K562 (cell line): ENCODE measurements at regions of chr13 and their contacts with region 1.

Region 1: DNA sequence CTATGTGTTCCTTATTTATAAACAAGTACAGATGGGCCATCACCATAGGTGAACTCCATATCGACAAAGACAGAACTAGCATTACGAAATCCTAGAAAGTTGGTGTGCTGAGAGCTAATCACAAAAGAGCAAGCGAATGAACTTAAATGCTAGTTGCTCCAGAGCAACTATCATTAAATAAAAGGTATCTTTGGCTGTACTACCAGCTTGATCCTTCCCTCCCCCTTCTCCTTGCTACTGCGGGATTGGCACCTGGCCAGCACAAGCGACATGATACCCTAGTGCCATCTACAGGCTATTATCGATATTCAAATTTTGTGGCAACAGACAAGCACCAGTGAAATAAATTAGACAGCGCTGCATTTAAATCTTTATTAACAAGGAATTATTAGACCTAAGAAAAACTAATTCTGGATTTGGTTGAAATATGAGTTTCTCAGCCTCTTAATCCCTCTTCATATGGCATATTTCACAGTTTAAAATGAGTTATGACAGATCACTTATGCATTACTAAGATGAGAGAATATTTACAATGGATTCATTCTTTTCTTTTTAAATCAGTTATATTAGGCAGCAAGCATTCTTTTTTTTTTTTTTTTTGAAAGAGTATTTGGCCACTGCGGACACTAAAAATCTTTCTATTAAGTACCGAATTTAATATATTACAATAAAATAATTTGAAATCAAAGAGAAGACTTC is 5.8 kb downstream of the PCDH9 start:
- DNase-seq: peak; percentile 51 to 78 (median 62)
- ATAC-seq: peak; percentile 82
- H3K4me3 ChIP-seq: no peak overlapping the region
- H3K27ac ChIP-seq: no peak overlapping the region
- H3K4me1 ChIP-seq: peaks cover 0 to under 1% of the 10 kb centered on the region in 2 experiments; a peak in 1 of 5 replicates
- H3K27me3 ChIP-seq: no peaks in the 10 kb centered on the region
- CTCF ChIP-seq: peak; percentile 48 to 66 (median 49); a peak in 5 of 6 replicates
- EP300 ChIP-seq: no peak
- POLR2A ChIP-seq: no peak
- RAD21 ChIP-seq: peak; percentile 74 to 79

Region 2: DNA sequence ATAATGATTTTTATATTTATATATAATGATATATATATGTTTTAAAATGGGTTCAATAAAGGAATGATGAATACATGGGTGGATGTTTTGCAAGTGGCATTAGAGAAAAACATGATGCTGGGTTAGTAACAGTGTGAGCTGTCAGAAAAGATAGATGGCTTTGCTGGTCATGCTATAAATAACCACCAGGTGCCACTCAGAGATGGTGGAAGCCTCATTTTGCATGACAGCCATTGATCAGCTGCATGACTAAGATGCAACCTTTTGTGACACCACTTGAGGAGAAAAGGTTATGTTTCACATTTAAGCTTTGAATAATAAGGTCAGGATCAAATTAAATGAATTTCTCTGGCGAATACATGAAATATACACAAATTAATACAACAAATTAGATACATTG is 731.8 kb before region 1 on chr13:
- CTCF ChIA-PET with region 1: no interaction called
- POLR2A ChIA-PET with region 1: no interaction called
- in situ Hi-C with region 1: no loop called
- intact Hi-C with region 1: loop called (anchors 10 kb)
- DNase-seq: peak in 3 of 4 experiments; percentile 2 to 29 (median 4)
- ATAC-seq: peak; percentile 49; the same call in 1 of the 3 replicates
- H3K4me3 ChIP-seq: no peak overlapping the region
- H3K27ac ChIP-seq: no peak overlapping the region
- H3K4me1 ChIP-seq: no peaks in the 10 kb centered on the region; a peak in 1 of 5 replicates
- H3K27me3 ChIP-seq: no peaks in the 10 kb centered on the region
- CTCF ChIP-seq: peak in 1 of 3 experiments; percentile 35; a peak in 2 of 6 replicates
- EP300 ChIP-seq: no peak
- POLR2A ChIP-seq: no peak
- RAD21 ChIP-seq: peak in 1 of 2 experiments; percentile 50; a peak in 2 of 4 replicates

Region 3: GRCh38 chr13:67075239-67075638 is 149.1 kb before region 1 on chr13:
- CTCF ChIA-PET with region 1: no interaction called
- POLR2A ChIA-PET with region 1: no interaction called
- in situ Hi-C with region 1: no loop called
- intact Hi-C with region 1: loop called (anchors 5 kb)
- DNase-seq: no peak
- ATAC-seq: no peak
- H3K4me3 ChIP-seq: no peak overlapping the region
- H3K27ac ChIP-seq: no peak overlapping the region
- H3K4me1 ChIP-seq: no peaks in the 10 kb centered on the region
- H3K27me3 ChIP-seq: no peaks in the 10 kb centered on the region
- CTCF ChIP-seq: peak in 1 of 3 experiments; percentile 23; a peak in 1 of 6 replicates
- EP300 ChIP-seq: no peak
- POLR2A ChIP-seq: no peak
- RAD21 ChIP-seq: peak in 1 of 2 experiments; percentile 34; a peak in 2 of 4 replicates

Region 4: DNA sequence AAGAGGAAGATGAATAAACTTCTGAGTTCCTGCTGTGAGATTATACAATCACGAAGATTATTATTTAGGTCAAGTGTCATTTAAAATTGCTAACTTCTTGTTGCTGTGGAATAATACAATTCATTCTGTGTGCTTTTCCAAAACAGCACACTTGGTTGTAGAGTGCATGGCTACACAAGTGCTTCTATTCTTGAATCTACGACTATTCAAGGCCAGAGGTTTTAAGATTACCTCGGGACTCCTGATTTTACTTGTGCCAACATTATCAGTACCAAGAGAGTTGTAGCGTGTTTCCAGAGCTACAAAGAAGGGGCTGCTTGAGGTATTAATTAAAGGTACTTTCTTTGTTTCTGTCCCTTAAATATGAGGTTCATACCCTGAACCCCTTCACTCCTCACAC is 239.9 kb after region 1 on chr13:
- CTCF ChIA-PET with region 1: no interaction called
- POLR2A ChIA-PET with region 1: no interaction called
- in situ Hi-C with region 1: no loop called
- intact Hi-C with region 1: no loop called
- DNase-seq: no peak
- ATAC-seq: no peak
- H3K4me3 ChIP-seq: no peak overlapping the region
- H3K27ac ChIP-seq: no peak overlapping the region
- H3K4me1 ChIP-seq: no peaks in the 10 kb centered on the region
- H3K27me3 ChIP-seq: no peaks in the 10 kb centered on the region
- CTCF ChIP-seq: no peak
- EP300 ChIP-seq: no peak
- POLR2A ChIP-seq: no peak
- RAD21 ChIP-seq: no peak